PC-9 (cell line): ENCODE measurements at regions of chr9 and their contacts with region 1.

Region 1: GRCh38 chr9:130128733-130129431 is 43.3 kb upstream of the NCS1 start:
- DNase-seq: peak; percentile 52 to 83
- H3K4me3 ChIP-seq: 0 out of 2 replicates have a peak overlapping the region, but pooled peaks have one; percentile 13
- H3K27ac ChIP-seq: peak overlapping the region; percentile 80
- H3K4me1 ChIP-seq: peaks cover 46% of the 10 kb centered on the region
- H3K27me3 ChIP-seq: no peaks in the 10 kb centered on the region
- CTCF ChIP-seq: no peak

Region 2: DNA sequence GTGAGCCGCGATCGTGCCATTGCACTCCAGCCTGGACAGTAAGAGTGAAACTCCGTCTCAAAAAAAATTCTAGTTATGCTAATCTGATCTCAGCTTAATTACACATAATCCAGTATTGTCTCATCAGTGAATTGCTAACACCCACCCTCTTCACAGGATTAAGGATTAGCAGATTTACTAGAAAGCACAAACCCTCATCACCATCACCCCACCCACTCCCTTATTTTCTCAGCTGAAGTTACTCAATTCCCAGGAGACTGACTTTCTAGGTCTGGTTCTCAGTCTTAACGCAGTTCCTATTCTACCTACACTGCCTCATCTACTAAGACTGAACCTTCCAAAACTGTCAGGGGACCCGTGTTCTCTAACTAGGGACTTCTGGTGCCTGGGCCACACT is 316.9 kb before region 1 on chr9:
- CTCF ChIA-PET with region 1: no interaction called
- POLR2A ChIA-PET with region 1: no interaction called
- intact Hi-C with region 1: no loop called
- DNase-seq: no peak
- H3K4me3 ChIP-seq: no peak overlapping the region
- H3K27ac ChIP-seq: no peak overlapping the region
- H3K4me1 ChIP-seq: no peaks in the 10 kb centered on the region
- H3K27me3 ChIP-seq: no peaks in the 10 kb centered on the region
- CTCF ChIP-seq: no peak

Region 3: GRCh38 chr9:129954868-129955550 is 173.9 kb before region 1 on chr9:
- CTCF ChIA-PET with region 1: no interaction called
- POLR2A ChIA-PET with region 1: interaction called, 10 read pairs
- intact Hi-C with region 1: no loop called
- DNase-seq: no peak
- H3K4me3 ChIP-seq: no peak overlapping the region
- H3K27ac ChIP-seq: peak overlapping the region; percentile 43; the same call in 1 of the 2 replicates
- H3K4me1 ChIP-seq: peaks cover 8% of the 10 kb centered on the region
- H3K27me3 ChIP-seq: no peaks in the 10 kb centered on the region
- CTCF ChIP-seq: no peak

Region 4: GRCh38 chr9:130172161-130172857 is 43.4 kb after region 1 on chr9 and contains the start of gene NCS1:
- CTCF ChIA-PET with region 1: interaction called, 4 read pairs
- POLR2A ChIA-PET with region 1: interaction called, 7 read pairs
- intact Hi-C with region 1: loop called (anchors 5 kb)
- DNase-seq: peak in 1 of 2 experiments; percentile 76
- H3K4me3 ChIP-seq: peak within 1 kb of the TSS; percentile 62
- H3K27ac ChIP-seq: no peak within 1 kb of the TSS
- H3K4me1 ChIP-seq: peaks cover 4% of the 10 kb centered on the region; the same call in 1 of the 2 replicates
- H3K27me3 ChIP-seq: no peaks in the 10 kb centered on the region
- CTCF ChIP-seq: no peak
- total RNA-seq, gene NCS1: 53.0 and 59.2 TPM in 2 replicates

Region 5: DNA sequence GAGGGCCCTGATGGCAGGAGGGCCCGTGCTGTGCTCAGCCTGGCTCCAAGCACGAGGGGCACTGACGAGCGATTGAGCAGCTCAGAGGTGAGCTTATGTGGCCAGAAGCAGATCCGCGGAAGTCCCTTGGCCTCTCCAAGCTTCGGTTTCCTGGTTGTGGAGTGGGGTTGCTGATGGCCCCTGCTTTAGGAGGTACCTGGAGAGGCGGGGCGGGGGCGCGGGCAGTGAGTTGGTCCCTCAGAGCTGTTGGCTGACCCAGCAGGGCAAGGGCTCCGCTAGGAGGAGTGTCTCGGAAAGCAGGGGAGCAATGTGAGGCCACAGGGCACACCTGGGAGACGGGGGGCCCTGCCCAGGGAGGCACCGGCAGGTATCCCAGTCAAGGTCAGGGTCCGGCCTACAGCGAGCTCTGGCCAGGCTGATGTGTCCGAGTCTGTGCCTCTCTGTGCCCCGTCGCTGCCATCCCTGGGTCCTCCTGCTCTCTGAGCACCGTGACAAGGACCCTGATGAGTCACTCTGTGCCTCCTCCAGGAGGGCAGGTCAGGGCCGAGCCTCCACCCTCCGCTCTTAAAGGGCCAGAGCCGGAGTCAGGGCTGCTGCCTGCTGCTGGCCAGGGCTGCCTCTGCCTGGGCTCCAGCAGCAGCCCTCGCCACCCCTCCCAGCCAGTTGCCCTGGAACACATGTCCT is 58.1 kb after region 1 on chr9:
- CTCF ChIA-PET with region 1: no interaction called
- POLR2A ChIA-PET with region 1: no interaction called
- intact Hi-C with region 1: loop called (anchors 2 kb)
- DNase-seq: peak; percentile 75 to 86
- H3K4me3 ChIP-seq: peak overlapping the region; percentile 55
- H3K27ac ChIP-seq: no peak overlapping the region
- H3K4me1 ChIP-seq: peaks cover 11% of the 10 kb centered on the region
- H3K27me3 ChIP-seq: no peaks in the 10 kb centered on the region
- CTCF ChIP-seq: no peak